CD8-positive, alpha-beta T cell (primary cell): ENCODE measurements at regions of chr12 and their contacts with region 1.

Region 1: DNA sequence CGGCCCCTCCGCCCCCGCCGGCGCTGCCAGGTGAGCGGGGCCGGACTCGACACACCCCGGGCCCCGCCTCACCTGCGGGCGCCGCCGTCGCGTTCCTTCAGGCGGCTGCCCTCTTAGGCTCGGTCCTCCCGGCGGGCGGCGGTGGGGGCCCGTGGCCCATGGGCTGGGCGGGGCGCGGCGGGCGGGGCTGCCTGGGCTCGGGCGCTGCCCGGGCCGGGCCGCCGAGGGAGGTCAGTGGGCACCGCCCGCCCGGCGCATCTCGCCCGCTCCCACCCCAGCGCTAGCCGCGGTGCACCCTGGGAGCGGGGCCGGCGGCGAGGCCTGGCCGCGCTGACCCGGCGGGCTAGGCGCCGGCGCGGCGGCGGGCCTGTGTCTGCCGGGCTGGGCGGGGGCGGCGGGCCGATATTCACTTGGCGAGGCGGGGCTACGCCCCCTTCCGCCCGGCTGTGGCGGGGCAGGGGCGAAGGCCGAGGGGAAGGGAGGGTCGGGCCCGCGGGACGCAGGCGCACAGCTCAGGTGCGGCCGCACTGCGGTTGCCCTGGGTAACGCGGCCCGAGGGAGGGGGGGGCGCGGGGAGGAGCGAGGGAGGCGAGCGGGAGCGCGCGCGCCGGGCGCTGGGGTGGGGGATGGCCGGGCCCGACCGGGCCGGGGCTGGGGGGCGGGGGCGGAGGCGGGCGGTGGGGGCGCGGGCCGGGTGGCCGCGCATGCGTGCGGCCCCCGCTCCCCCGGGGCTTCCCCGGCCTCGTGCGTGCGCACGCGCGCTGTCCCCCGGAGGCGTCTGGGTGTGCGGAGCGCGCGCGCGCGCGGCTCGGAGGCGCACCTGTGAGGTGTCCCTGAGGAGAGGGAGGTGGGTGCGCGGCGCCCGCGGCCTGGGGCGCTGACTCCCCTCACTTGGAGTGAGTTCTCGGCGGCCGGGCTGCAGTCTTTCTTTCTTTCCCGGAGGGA is at the starts of genes CCDC92 and ZNF664:
- DNase-seq: peak; percentile 88 to 98 (median 95)
- ATAC-seq: peak; percentile 75
- H3K4me3 ChIP-seq: peak within 1 kb of the TSS; percentile 60 to 63
- H3K4me3 Mint-ChIP-seq: peak within 1 kb of the TSS; percentile 91
- H3K27ac ChIP-seq: peak within 1 kb of the TSS; percentile 34 to 44
- H3K27ac Mint-ChIP-seq: peak within 1 kb of the TSS; percentile 89
- H3K4me1 ChIP-seq: peaks cover 19% of the 10 kb centered on the region
- H3K4me1 Mint-ChIP-seq: peaks cover 36% of the 10 kb centered on the region
- H3K27me3 ChIP-seq: no peaks in the 10 kb centered on the region
- H3K27me3 Mint-ChIP-seq: no peaks in the 10 kb centered on the region
- CTCF ChIP-seq: no peak
- total RNA-seq, gene CCDC92: 6.9 to 8.1 TPM
- total RNA-seq, gene ZNF664: 14.2 to 17.9 TPM

Region 2: DNA sequence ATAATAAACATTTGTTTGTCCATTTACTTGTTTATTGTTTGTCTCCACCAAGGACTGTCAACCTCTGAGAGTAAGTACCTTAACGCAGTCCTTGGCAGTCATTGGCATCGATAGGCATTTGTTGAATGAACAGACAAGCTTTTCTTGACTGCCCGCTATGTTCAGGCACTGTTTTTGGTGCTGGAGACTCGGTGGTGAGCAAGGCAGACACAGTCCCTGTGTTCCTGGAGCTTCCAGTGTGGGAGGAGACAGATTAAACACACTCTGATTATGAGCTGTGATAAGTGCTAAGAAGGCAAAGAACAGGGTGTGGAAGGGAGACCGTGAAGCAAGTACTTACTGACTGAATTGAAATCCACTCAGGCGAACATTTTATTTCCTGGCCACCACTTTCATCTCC is 259.3 kb before region 1 on chr12:
- CTCF ChIA-PET with region 1: no interaction called
- POLR2A ChIA-PET with region 1: no interaction called
- intact Hi-C with region 1: loop called in 1 of 2 experiments (anchors 5 kb)
- DNase-seq: peak in 1 of 9 experiments; percentile 21
- ATAC-seq: no peak
- H3K4me3 ChIP-seq: peak overlapping the region; percentile 69 to 98
- H3K4me3 Mint-ChIP-seq: peak overlapping the region; percentile 84
- H3K27ac ChIP-seq: no peak overlapping the region
- H3K27ac Mint-ChIP-seq: peak overlapping the region; percentile 86
- H3K4me1 ChIP-seq: peaks cover 22% of the 10 kb centered on the region
- H3K4me1 Mint-ChIP-seq: peaks cover 45% of the 10 kb centered on the region
- H3K27me3 ChIP-seq: no peaks in the 10 kb centered on the region
- H3K27me3 Mint-ChIP-seq: no peaks in the 10 kb centered on the region
- CTCF ChIP-seq: no peak

Region 3: GRCh38 chr12:123938679-123939480 is 33.8 kb before region 1 on chr12:
- CTCF ChIA-PET with region 1: interaction called, 4 read pairs
- POLR2A ChIA-PET with region 1: interaction called, 10 read pairs
- intact Hi-C with region 1: loop called (anchors 2 kb)
- DNase-seq: peak in 2 of 9 experiments; percentile 31 to 36
- ATAC-seq: no peak
- H3K4me3 ChIP-seq: peak overlapping the region; percentile 34 to 44
- H3K4me3 Mint-ChIP-seq: peak overlapping the region; percentile 72
- H3K27ac ChIP-seq: peak overlapping the region; percentile 55 to 81
- H3K27ac Mint-ChIP-seq: peak overlapping the region; percentile 84
- H3K4me1 ChIP-seq: peaks cover 29% of the 10 kb centered on the region
- H3K4me1 Mint-ChIP-seq: peaks cover 33% of the 10 kb centered on the region
- H3K27me3 ChIP-seq: no peaks in the 10 kb centered on the region
- H3K27me3 Mint-ChIP-seq: no peaks in the 10 kb centered on the region
- CTCF ChIP-seq: no peak

Region 4: DNA sequence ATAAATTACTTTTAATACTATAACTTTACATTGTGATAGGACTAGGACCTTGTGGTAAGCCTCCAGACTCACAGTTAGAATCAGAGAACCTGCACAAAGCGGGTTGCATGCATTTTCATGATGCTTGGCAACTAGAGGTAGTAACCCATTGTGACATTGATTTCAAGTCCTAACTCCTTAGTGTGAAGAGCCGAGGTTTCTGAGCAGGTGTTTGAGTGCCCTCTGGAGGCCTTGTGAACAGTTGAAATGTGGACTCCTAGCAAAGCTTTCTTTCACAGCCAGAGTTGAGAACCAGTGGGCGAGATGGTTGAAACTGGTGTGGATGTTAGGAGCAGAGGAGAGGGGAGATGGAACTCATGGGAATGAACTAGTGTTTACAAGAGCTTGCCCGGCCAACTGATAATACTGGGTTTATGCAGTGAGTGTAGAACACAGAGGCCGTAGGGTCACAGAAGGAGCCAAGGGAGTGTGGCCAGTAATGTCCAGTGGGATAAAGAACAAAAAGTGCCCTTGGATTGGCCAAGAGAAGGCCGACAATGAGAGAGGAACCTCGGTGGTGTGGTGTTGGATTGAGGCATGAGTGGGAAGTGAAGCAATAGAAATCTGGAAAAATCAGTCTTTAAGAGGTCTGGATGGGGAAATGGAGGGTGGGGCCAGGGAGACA is 11.2 kb after region 1 on chr12:
- CTCF ChIA-PET with region 1: no interaction called
- POLR2A ChIA-PET with region 1: no interaction called
- intact Hi-C with region 1: no loop called
- DNase-seq: peak in 8 of 9 experiments; percentile 23 to 80 (median 54)
- ATAC-seq: peak; percentile 75
- H3K4me3 ChIP-seq: no peak overlapping the region
- H3K4me3 Mint-ChIP-seq: no peak overlapping the region
- H3K27ac ChIP-seq: no peak overlapping the region
- H3K27ac Mint-ChIP-seq: no peak overlapping the region
- H3K4me1 ChIP-seq: no peaks in the 10 kb centered on the region
- H3K4me1 Mint-ChIP-seq: peaks cover 17% of the 10 kb centered on the region
- H3K27me3 ChIP-seq: no peaks in the 10 kb centered on the region
- H3K27me3 Mint-ChIP-seq: no peaks in the 10 kb centered on the region
- CTCF ChIP-seq: peak; percentile 73

Region 5: GRCh38 chr12:124453419-124454351 is 481.0 kb after region 1 on chr12:
- CTCF ChIA-PET with region 1: no interaction called
- POLR2A ChIA-PET with region 1: no interaction called
- intact Hi-C with region 1: loop called in 1 of 2 experiments (anchors 5 kb)
- DNase-seq: peak; percentile 64 to 95 (median 84)
- ATAC-seq: peak; percentile 78
- H3K4me3 ChIP-seq: peak overlapping the region; percentile 29 to 57
- H3K4me3 Mint-ChIP-seq: peak overlapping the region; percentile 67
- H3K27ac ChIP-seq: peak overlapping the region; percentile 41 to 92
- H3K27ac Mint-ChIP-seq: peak overlapping the region; percentile 82
- H3K4me1 ChIP-seq: peaks cover 82% of the 10 kb centered on the region
- H3K4me1 Mint-ChIP-seq: peaks cover 67% of the 10 kb centered on the region
- H3K27me3 ChIP-seq: no peaks in the 10 kb centered on the region
- H3K27me3 Mint-ChIP-seq: no peaks in the 10 kb centered on the region
- CTCF ChIP-seq: no peak

Region 6: GRCh38 chr12:124917135-124917840 is 944.6 kb after region 1 on chr12:
- CTCF ChIA-PET with region 1: no interaction called
- POLR2A ChIA-PET with region 1: no interaction called
- intact Hi-C with region 1: loop called (anchors 5 to 10 kb)
- DNase-seq: peak; percentile 79 to 98 (median 91)
- ATAC-seq: peak; percentile 73
- H3K4me3 ChIP-seq: peak overlapping the region; percentile 31 to 40
- H3K4me3 Mint-ChIP-seq: peak overlapping the region; percentile 82
- H3K27ac ChIP-seq: peak overlapping the region; percentile 87 to 89
- H3K27ac Mint-ChIP-seq: peak overlapping the region; percentile 97
- H3K4me1 ChIP-seq: peaks cover 62% of the 10 kb centered on the region
- H3K4me1 Mint-ChIP-seq: peaks cover 87% of the 10 kb centered on the region
- H3K27me3 ChIP-seq: no peaks in the 10 kb centered on the region
- H3K27me3 Mint-ChIP-seq: no peaks in the 10 kb centered on the region
- CTCF ChIP-seq: no peak